AG04449 (cell line): ENCODE measurements at regions of chr2 and their contacts with region 1.

Region 1: GRCh38 chr2:18836436-18836835 is 247.1 kb upstream of the NT5C1B start:
- DNase-seq: no peak
- H3K4me3 ChIP-seq: no peak overlapping the region
- CTCF ChIP-seq: no peak

Region 2: DNA sequence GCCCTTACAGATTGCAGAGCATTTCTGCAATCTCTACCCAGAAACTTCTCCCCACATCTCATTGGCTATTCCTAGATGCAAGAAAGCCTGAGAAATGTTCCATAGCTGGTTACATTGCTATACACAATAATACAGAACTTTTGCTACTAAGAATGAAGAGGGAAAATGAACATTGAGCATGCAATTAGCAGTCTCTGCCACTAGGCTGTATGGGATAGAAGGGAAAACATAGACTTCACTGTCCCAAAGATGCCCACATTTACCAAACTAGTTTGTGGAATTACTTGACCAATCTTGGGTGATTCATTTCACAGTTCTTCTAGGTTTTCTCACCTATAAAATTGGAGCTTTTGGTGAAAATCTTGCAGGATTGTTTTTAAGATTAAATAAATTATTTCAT is 18.6 kb after region 1 on chr2:
- CTCF ChIA-PET with region 1: interaction called, 11 read pairs
- POLR2A ChIA-PET with region 1: no interaction called
- DNase-seq: no peak
- H3K4me3 ChIP-seq: no peak overlapping the region
- CTCF ChIP-seq: peak; percentile 39